ENCODE measurements at regions of chr4 and their contacts with region 1.

Region 1: GRCh38 chr4:10013722-10014121 is 7.6 kb downstream of the SLC2A9 start:
- DNase-seq: peak; percentile 64 to 71 (median 68)
- ATAC-seq: peak; percentile 91
- H3K4me3 ChIP-seq: no peak overlapping the region
- H3K27ac ChIP-seq: no peak overlapping the region
- H3K4me1 ChIP-seq: peaks cover 3 to 10% of the 10 kb centered on the region in 2 experiments; a peak in 3 of 5 replicates
- H3K27me3 ChIP-seq: peaks cover 0 to 6% of the 10 kb centered on the region in 2 experiments; a peak in 1 of 5 replicates
- CTCF ChIP-seq: peak; percentile 72 to 82 (median 75)
- EP300 ChIP-seq: no peak
- POLR2A ChIP-seq: no peak
- RAD21 ChIP-seq: peak; percentile 54 to 78

Region 2: GRCh38 chr4:9924750-9925149 is 89.0 kb before region 1 on chr4:
- CTCF ChIA-PET with region 1: no interaction called
- POLR2A ChIA-PET with region 1: no interaction called
- in situ Hi-C with region 1: no loop called
- intact Hi-C with region 1: loop called (anchors 5 kb)
- DNase-seq: no peak
- ATAC-seq: peak; percentile 42; the same call in 1 of the 3 replicates
- H3K4me3 ChIP-seq: no peak overlapping the region
- H3K27ac ChIP-seq: no peak overlapping the region
- H3K4me1 ChIP-seq: no peaks in the 10 kb centered on the region; a peak in 1 of 5 replicates
- H3K27me3 ChIP-seq: peaks cover 0 to 29% of the 10 kb centered on the region in 2 experiments; a peak in 4 of 5 replicates
- CTCF ChIP-seq: no peak
- EP300 ChIP-seq: no peak
- POLR2A ChIP-seq: no peak
- RAD21 ChIP-seq: no peak

Region 3: DNA sequence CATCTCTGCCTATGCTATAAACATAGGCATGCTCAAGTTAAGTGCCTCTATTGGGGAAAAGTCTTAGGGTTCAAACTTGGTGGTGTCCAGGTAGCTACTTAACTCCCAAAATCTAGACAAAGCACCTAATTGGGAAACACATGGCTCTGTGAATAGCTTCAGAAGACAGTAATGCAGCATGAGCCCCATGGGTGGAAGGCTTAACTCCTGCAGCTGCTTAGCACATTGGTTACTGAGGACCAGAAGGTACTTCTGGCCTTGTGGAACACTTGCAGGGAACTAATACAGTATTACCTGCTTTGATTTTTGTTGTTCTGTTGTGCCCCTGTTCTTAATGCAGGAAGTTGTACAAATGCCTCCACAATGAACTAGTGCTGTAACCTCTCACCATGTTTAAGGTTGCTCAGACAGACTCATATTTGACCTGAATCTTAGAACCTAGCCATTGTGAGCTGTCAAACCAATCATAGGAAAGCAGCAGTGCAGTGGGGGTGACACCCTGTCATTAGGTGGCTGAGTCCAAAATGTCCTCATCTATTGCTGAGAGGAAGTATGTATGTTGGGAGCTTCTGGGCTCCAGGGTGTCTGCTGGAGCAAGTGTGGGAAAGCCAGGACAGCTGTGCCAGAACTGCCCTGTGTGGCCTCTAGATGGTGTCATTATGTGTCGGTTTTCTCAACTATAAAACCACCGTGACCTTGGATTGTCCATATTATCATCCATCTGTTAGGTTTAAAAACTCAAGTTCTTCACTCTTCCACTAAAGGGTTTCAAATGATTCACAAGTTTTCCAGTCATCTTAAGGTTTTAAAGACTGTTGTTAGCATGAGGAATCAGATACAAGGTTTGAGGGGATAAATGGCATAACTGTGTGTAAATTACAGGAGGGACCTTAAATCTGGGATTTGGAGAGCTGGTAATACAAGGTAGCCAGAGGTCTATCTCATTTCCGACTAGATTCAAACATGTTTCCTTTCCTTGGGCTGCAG is 172.8 kb after region 1 on chr4:
- CTCF ChIA-PET with region 1: no interaction called
- POLR2A ChIA-PET with region 1: no interaction called
- in situ Hi-C with region 1: no loop called
- intact Hi-C with region 1: no loop called
- DNase-seq: peak; percentile 60 to 81 (median 65)
- ATAC-seq: peak; percentile 67
- H3K4me3 ChIP-seq: no peak overlapping the region
- H3K27ac ChIP-seq: peak overlapping the region; percentile 100
- H3K4me1 ChIP-seq: peaks cover 27 to 87% of the 10 kb centered on the region in 2 experiments
- H3K27me3 ChIP-seq: no peaks in the 10 kb centered on the region
- CTCF ChIP-seq: peak; percentile 60 to 78 (median 75)
- EP300 ChIP-seq: peak; percentile 54
- POLR2A ChIP-seq: no peak
- RAD21 ChIP-seq: peak; percentile 64 to 68

Region 4: GRCh38 chr4:10582059-10582686 is 568.5 kb after region 1 on chr4:
- CTCF ChIA-PET with region 1: no interaction called
- POLR2A ChIA-PET with region 1: no interaction called
- in situ Hi-C with region 1: no loop called
- intact Hi-C with region 1: no loop called
- DNase-seq: peak; percentile 37 to 60 (median 52)
- ATAC-seq: peak; percentile 85
- H3K4me3 ChIP-seq: no peak overlapping the region
- H3K27ac ChIP-seq: no peak overlapping the region
- H3K4me1 ChIP-seq: no peaks in the 10 kb centered on the region
- H3K27me3 ChIP-seq: no peaks in the 10 kb centered on the region
- CTCF ChIP-seq: peak; percentile 60 to 87 (median 74)
- EP300 ChIP-seq: no peak
- POLR2A ChIP-seq: no peak
- RAD21 ChIP-seq: peak; percentile 76 to 83

Region 5: GRCh38 chr4:10879411-10880110 is 865.8 kb after region 1 on chr4:
- CTCF ChIA-PET with region 1: no interaction called
- POLR2A ChIA-PET with region 1: no interaction called
- in situ Hi-C with region 1: no loop called
- intact Hi-C with region 1: no loop called
- DNase-seq: no peak
- ATAC-seq: no peak
- H3K4me3 ChIP-seq: no peak overlapping the region
- H3K27ac ChIP-seq: no peak overlapping the region
- H3K4me1 ChIP-seq: no peaks in the 10 kb centered on the region
- H3K27me3 ChIP-seq: no peaks in the 10 kb centered on the region
- CTCF ChIP-seq: no peak
- EP300 ChIP-seq: no peak
- POLR2A ChIP-seq: no peak
- RAD21 ChIP-seq: no peak